OCI-LY7 (cell line): ENCODE measurements at regions of chr20 and their contacts with region 1.

Region 1: GRCh38 chr20:33862709-33863403 is 51.7 kb downstream of the CHMP4B start:
- DNase-seq: peak; percentile 90
- H3K4me3 ChIP-seq: peak overlapping the region; percentile 20
- H3K27ac ChIP-seq: peak overlapping the region; percentile 56
- H3K4me1 ChIP-seq: peaks cover 70% of the 10 kb centered on the region
- CTCF ChIP-seq: peak; percentile 87

Region 2: DNA sequence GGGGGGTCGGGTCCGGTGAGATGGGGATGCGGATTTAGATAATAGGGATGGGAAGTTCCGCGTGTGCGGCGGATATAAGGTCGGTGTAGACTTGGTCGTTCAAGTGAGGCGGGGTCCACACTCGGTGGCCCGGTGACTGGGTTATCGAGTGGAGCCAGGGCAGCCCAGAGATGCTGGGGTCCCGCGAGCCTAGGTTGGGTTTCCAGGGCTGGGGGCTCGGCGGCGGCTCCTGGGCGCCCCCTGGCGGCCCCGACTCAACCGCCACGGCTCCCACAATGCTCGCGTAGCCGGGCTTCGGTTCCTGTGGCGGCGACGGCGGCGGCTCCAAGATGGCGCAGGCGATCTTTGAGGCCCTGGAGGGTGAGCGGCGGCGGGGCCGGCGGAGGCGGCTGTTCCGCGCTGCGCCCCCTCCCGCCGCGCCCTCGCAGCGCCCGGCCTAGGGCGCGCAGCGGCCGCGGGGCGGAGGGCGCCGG is 131.1 kb before region 1 on chr20 and contains the start of gene ZNF341:
- CTCF ChIA-PET with region 1: no interaction called
- POLR2A ChIA-PET with region 1: no interaction called
- intact Hi-C with region 1: loop called (anchors 5 kb)
- DNase-seq: peak; percentile 94
- H3K4me3 ChIP-seq: peak within 1 kb of the TSS; percentile 70
- H3K27ac ChIP-seq: peak within 1 kb of the TSS; percentile 90
- H3K4me1 ChIP-seq: peaks cover 30% of the 10 kb centered on the region
- CTCF ChIP-seq: peak; percentile 81
- total RNA-seq, gene ZNF341: 3.2 and 3.4 TPM in 2 replicates

Region 3: DNA sequence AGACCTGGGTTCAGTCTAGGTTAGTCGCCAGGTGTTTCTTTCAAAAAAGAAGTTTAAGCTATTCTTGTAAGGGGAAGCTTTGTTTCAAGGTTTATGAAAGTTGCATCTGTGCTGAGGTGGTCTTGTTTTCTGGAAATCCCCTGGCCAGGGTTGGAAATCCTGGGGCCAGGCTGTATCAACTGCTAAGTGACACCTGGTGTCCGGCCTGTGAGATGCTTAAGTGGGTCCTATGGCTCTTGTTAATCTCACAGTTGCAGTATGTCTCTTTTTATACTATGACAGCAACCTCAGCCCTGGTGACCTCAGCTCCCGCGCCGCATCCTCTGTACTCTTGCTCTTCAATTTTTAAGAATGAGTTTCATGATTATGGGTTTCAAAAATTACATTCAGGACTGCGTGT is 20.3 kb after region 1 on chr20:
- CTCF ChIA-PET with region 1: interaction called, 7 read pairs
- POLR2A ChIA-PET with region 1: interaction called, 11 read pairs
- intact Hi-C with region 1: loop called (anchors 1 kb)
- DNase-seq: peak; percentile 98
- H3K4me3 ChIP-seq: peak overlapping the region; percentile 38
- H3K27ac ChIP-seq: peak overlapping the region; percentile 97
- H3K4me1 ChIP-seq: peaks cover 82% of the 10 kb centered on the region
- CTCF ChIP-seq: peak; percentile 61

Region 4: GRCh38 chr20:33925867-33926266 is 63.0 kb after region 1 on chr20:
- CTCF ChIA-PET with region 1: no interaction called
- POLR2A ChIA-PET with region 1: no interaction called
- intact Hi-C with region 1: no loop called
- DNase-seq: no peak
- H3K4me3 ChIP-seq: no peak overlapping the region
- H3K27ac ChIP-seq: no peak overlapping the region
- H3K4me1 ChIP-seq: peaks cover 13% of the 10 kb centered on the region
- CTCF ChIP-seq: no peak

Region 5: GRCh38 chr20:33947709-33948295 is 84.9 kb after region 1 on chr20:
- CTCF ChIA-PET with region 1: no interaction called
- POLR2A ChIA-PET with region 1: no interaction called
- intact Hi-C with region 1: loop called (anchors 1 kb)
- DNase-seq: peak; percentile 87
- H3K4me3 ChIP-seq: no peak overlapping the region
- H3K27ac ChIP-seq: no peak overlapping the region
- H3K4me1 ChIP-seq: no peaks in the 10 kb centered on the region
- CTCF ChIP-seq: peak; percentile 100

Region 6: GRCh38 chr20:34049897-34050695 is 187.2 kb after region 1 on chr20:
- CTCF ChIA-PET with region 1: interaction called, 15 read pairs
- POLR2A ChIA-PET with region 1: no interaction called
- intact Hi-C with region 1: no loop called
- DNase-seq: no peak
- H3K4me3 ChIP-seq: no peak overlapping the region
- H3K27ac ChIP-seq: no peak overlapping the region
- H3K4me1 ChIP-seq: peaks cover 6% of the 10 kb centered on the region
- CTCF ChIP-seq: no peak

Region 7: GRCh38 chr20:34129518-34130162 is 266.8 kb after region 1 on chr20:
- CTCF ChIA-PET with region 1: no interaction called
- POLR2A ChIA-PET with region 1: no interaction called
- intact Hi-C with region 1: loop called (anchors 1 kb)
- DNase-seq: peak; percentile 84
- H3K4me3 ChIP-seq: peak overlapping the region; percentile 54
- H3K27ac ChIP-seq: no peak overlapping the region
- H3K4me1 ChIP-seq: peaks cover 13% of the 10 kb centered on the region
- CTCF ChIP-seq: peak; percentile 96